ENCODE measurements at regions of chr3 and their contacts with region 1.

Region 1: GRCh38 chr3:149273096-149273751 is 51.6 kb upstream of the CP start:
- DNase-seq: no peak
- ATAC-seq: peak; percentile 78 to 82
- H3K4me3 ChIP-seq: no peak overlapping the region
- H3K27ac ChIP-seq: no peak overlapping the region
- H3K4me1 ChIP-seq: no peaks in the 10 kb centered on the region
- H3K27me3 ChIP-seq: no peaks in the 10 kb centered on the region

Region 2: GRCh38 chr3:148861277-148861869 is 411.9 kb before region 1 on chr3:
- intact Hi-C with region 1: loop called in 1 of 4 experiments (anchors 10 kb)
- DNase-seq: no peak
- ATAC-seq: peak in 1 of 2 donors; percentile 49
- H3K4me3 ChIP-seq: no peak overlapping the region
- H3K27ac ChIP-seq: no peak overlapping the region
- H3K4me1 ChIP-seq: no peaks in the 10 kb centered on the region
- H3K27me3 ChIP-seq: no peaks in the 10 kb centered on the region

Region 3: DNA sequence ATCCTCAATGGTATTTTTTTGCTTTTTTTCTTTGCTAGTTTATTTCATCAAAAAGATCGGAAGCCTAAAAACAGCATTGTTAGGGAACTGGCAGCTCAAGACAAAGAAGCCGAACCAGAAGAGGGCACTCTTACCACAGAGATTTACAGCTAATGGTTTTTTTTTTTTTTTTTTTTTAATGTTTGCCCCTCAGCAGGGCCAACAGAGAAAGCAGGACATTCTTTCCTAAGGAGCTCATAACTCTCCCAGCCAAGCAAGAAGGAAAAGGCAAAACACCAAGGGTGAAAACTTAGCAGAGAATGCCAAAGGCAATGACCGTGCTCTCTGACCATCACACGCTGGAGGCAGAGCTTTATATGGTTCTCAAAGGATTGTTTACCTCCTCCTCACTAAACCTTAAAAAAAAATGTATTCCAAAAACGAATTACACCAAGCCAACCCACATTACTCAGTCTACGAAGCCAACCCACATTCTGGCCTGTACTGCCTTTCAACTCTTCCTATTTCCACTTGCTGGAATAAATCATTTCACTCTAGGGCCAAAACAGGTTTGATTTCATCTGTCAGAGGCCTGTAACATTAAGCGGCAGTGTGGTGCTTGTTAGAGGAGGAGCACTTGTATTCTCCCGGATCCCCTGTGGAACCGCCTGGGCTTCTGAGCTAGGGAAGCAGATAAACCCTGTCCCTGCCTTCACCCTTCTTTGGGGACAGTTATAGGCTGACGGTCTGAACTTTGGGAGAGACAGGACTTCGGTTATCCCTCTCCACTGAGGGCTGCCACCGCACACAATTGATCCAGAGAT is 317.5 kb before region 1 on chr3:
- intact Hi-C with region 1: loop called (anchors 2 to 10 kb)
- DNase-seq: peak in 2 of 3 donors; percentile 19 to 60
- ATAC-seq: peak; percentile 94 to 95
- H3K4me3 ChIP-seq: no peak overlapping the region
- H3K27ac ChIP-seq: peak overlapping the region; percentile 96
- H3K4me1 ChIP-seq: no peaks in the 10 kb centered on the region
- H3K27me3 ChIP-seq: no peaks in the 10 kb centered on the region

Region 4: DNA sequence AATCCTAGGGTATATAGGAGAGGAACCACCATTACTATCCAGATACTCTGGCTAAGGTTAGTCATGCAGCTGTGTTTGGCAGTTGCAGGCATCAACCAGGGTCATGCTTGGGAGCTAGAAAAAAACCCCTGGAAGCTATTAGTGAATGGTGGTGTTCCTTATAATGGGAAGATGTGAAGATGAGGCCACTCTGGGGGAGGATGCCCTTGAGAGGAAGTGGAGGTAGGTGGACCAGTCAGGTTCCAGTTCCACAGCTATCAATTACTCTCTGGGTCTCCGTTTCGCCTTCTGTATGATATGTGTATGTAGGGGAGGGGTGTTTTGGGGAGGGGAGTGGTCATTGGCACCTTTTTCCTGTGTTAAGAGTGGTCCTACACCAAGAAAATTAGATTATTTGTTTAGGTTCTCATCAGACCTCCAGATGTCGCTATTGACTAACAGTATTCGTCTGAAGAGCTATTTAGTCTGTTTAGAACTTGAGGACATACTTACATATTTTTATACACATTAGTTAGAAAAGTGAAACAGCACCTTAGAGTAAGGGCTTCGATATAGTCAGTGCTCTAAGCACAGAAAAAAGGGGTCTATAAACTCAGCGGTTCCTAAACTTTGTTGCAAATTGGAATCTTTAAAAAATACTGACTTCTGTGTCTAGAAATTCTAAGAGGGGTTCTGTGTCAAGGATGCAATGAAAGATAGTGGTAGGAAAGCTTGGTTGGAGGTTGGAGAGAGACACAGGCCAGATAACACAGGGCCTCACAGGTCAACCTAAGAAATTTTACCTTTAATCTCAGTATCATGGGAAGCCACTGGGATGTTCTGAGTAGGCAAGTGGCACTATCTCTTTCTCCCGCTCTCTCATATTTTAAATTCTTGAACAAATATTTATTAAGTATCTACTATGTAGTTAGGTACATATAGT is 152.9 kb before region 1 on chr3:
- intact Hi-C with region 1: loop called (anchors 2 to 5 kb)
- DNase-seq: no peak
- ATAC-seq: peak; percentile 74 to 77
- H3K4me3 ChIP-seq: no peak overlapping the region
- H3K27ac ChIP-seq: no peak overlapping the region
- H3K4me1 ChIP-seq: no peaks in the 10 kb centered on the region
- H3K27me3 ChIP-seq: no peaks in the 10 kb centered on the region

Region 5: DNA sequence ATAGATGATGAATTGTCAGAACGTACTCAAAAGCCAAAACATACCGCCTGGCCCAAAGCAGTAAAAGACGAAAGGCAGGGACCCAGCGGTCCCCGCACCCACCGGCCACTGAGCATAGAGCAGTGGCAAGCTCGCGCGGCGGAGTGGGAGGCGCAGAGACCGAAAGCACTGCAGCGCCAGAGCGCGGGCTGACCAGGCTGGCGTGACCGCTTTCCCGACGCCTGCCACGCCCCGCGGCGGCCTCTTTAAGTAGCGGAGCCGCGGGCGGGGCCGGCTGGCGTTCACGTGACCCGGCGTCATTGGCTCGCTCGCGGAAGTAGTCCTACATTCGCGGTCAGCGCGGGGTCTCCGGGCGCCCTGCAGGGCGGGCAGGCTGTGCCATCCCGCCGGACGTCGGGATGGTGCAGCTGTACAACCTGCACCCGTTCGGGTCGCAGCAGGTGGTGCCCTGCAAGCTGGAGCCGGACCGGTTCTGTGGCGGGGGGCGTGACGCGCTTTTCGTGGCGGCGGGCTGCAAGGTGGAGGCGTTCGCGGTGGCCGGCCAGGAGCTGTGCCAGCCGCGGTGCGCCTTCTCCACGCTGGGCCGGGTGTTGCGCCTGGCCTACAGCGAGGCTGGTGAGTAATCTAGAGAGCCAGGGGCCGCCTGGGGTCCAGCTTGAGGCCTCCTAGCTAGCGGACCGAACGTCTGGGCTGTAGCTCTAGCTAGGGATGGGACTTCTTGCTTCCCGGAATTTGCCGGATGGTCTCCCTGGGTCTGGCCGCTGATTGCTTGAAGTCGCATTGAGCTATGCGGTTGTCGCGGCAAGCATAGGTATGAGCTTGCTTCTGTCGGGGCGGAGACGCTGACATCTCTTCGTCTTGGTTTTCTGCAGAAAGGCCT is 143.7 kb before region 1 on chr3 and contains the start of gene HPS3:
- intact Hi-C with region 1: loop called in 2 of 4 experiments (anchors 5 kb)
- DNase-seq: peak; percentile 94 to 98 (median 97)
- ATAC-seq: peak; percentile 99
- H3K4me3 ChIP-seq: peak within 1 kb of the TSS; percentile 87
- H3K27ac ChIP-seq: peak within 1 kb of the TSS; percentile 78
- H3K4me1 ChIP-seq: no peaks in the 10 kb centered on the region
- H3K27me3 ChIP-seq: no peaks in the 10 kb centered on the region
- total RNA-seq, gene HPS3: 7.4 to 9.7 (median 7.8) TPM

Measured in right cardiac atrium (tissue), 5 donors.